Ovary (tissue), 10 donors: ENCODE measurements at regions of chr16 and their contacts with region 1.

Region 1: GRCh38 chr16:48810803-48811453 is 200.9 kb upstream of the N4BP1 start:
- DNase-seq: no peak
- H3K4me3 ChIP-seq: no peak overlapping the region
- H3K27ac ChIP-seq: no peak overlapping the region
- H3K4me1 ChIP-seq: no peaks in the 10 kb centered on the region
- H3K27me3 ChIP-seq: no peaks in the 10 kb centered on the region
- CTCF ChIP-seq: no peak
- EP300 ChIP-seq: no peak
- POLR2A ChIP-seq: no peak

Region 2: DNA sequence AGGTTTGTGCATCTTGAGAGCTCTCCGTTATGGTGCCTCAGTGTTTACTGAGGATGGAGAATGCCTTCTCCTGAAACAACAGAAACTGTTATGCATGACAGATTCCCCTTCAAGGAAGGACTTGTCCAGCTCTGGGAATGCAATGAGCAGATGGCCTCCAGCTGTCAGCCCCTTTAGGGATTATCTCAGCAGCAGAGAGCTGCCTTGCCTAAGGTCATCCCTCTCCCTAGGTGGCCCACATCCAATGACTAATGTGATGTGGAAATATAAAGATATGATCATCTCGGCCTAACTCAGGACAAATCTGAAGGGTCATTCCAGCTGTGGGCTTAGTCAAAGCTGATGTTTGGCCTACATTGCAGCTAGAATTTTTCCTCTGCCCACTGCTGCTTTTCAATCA is 13.3 kb after region 1 on chr16:
- intact Hi-C with region 1: no loop called
- DNase-seq: no peak
- H3K4me3 ChIP-seq: no peak overlapping the region
- H3K27ac ChIP-seq: no peak overlapping the region
- H3K4me1 ChIP-seq: no peaks in the 10 kb centered on the region
- H3K27me3 ChIP-seq: no peaks in the 10 kb centered on the region
- CTCF ChIP-seq: no peak
- EP300 ChIP-seq: no peak
- POLR2A ChIP-seq: no peak

Region 3: GRCh38 chr16:48862087-48862532 is 51.2 kb after region 1 on chr16:
- intact Hi-C with region 1: no loop called
- DNase-seq: no peak
- H3K4me3 ChIP-seq: no peak overlapping the region
- H3K27ac ChIP-seq: no peak overlapping the region
- H3K4me1 ChIP-seq: no peaks in the 10 kb centered on the region
- H3K27me3 ChIP-seq: no peaks in the 10 kb centered on the region
- CTCF ChIP-seq: no peak
- EP300 ChIP-seq: no peak
- POLR2A ChIP-seq: no peak

Region 4: DNA sequence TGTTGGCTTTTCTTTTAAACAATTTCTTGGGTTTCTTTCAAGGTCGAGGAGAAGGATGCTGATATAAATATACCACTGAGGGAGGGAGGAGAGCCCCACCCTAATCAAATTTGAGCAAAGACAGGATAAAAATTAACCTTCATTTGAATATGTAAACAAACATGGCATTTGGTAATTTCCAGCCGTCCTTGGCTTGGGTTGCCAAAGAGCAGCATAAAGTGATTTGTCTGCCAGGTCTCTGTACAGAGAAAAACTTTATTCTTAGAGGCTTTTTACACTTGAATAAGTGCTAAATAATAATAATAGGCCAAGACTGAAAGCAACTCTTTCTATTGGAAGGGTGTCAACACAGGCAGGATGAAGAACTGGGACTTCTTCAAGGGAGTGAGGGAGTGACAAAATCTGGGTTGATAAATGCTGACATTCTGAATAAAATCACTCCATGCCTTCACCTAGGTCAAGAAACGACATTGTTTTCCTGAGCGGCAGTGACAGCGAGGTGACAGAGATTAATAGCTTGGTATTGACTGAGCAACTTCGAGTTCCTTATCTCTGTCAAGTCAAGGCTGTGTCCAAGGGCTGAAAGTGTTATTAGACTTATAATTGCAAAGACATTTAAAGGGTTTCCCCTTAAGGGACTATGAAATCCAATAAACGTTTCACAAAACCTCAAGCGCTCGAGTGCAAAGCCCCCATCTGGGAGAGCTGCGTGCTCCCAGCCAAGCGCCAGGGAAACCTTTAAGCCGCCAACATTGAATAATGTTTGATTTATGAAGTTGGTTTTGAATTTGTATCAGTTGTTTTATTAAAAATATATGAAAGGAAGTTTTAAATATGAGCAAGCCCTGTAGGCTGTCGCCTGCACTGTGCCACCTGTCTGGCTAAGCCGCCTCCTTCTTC is 68.5 kb after region 1 on chr16:
- intact Hi-C with region 1: loop called in 1 of 4 experiments (anchors 10 kb)
- DNase-seq: no peak
- H3K4me3 ChIP-seq: no peak overlapping the region
- H3K27ac ChIP-seq: no peak overlapping the region
- H3K4me1 ChIP-seq: no peaks in the 10 kb centered on the region
- H3K27me3 ChIP-seq: no peaks in the 10 kb centered on the region
- CTCF ChIP-seq: no peak
- EP300 ChIP-seq: no peak
- POLR2A ChIP-seq: no peak